Ascending aorta (tissue), 2 donors: ENCODE measurements at regions of chr4 and their contacts with region 1.

Region 1: DNA sequence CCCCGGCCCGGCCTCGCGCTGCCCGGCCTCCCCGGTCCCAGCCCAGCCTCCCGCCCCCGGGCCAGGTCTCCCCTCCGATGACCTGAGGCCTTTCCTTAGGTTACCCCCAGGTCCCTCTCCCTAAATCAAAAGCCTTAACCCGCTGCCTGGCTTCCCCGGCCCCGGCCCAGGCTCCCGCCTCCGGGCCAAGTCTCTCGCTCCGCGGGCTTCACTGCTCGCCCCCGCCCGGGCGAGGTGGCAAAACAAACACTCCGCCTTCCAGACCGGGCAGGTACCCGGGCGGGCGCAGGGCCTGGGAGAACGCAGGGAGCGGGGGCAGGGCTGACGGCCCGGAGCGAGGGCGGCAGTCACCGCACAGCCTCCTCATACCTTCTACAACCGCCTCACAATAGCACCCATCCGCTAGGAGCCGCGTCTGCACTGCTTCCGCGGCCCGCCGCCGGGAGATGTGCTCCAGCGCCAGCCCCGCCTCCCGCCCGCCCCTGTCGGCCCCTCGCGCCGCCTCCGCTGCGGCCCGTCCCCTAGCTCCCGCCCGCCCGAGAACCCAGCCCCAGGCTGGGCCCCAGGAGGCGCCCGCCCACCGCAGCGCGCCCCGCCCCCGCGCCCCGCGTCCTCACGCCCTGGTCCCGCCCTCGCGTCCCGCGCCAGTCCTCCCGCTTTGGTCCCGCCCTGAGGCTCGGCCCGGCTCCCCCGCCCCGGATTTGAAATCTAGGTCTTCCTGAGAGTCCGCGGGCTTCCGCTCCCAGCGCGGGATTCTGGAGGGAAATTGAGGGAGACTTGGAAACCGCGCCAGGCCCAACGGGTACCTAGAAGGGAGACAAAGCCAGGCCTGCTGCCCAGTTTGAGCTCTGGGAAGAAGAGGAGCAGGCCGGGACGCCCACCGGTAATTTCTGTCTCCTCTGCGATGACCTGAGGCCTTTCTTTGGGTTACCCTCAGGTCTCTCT is at the starts of genes CASP3 and PRIMPOL:
- DNase-seq: peak; percentile 88 to 98
- H3K4me3 ChIP-seq: peak within 1 kb of the TSS; percentile 88 to 100
- H3K27ac ChIP-seq: peak within 1 kb of the TSS; percentile 100
- H3K4me1 ChIP-seq: peaks cover 9 to 41% of the 10 kb centered on the region in 2 donors
- H3K27me3 ChIP-seq: no peaks in the 10 kb centered on the region
- CTCF ChIP-seq: peak in 1 of 3 experiments; percentile 17
- total RNA-seq, gene CASP3: 1.5 TPM
- total RNA-seq, gene PRIMPOL: 12.5 TPM

Region 2: GRCh38 chr4:183504064-183504929 is 1145.0 kb before region 1 on chr4:
- intact Hi-C with region 1: loop called (anchors 1 kb)
- DNase-seq: peak; percentile 93 to 100
- H3K4me3 ChIP-seq: peak overlapping the region; percentile 85 to 98
- H3K27ac ChIP-seq: peak overlapping the region; percentile 92 to 95
- H3K4me1 ChIP-seq: peaks cover 4 to 16% of the 10 kb centered on the region in 2 donors
- H3K27me3 ChIP-seq: no peaks in the 10 kb centered on the region
- CTCF ChIP-seq: peak; percentile 7 to 34 (median 8)

Region 3: DNA sequence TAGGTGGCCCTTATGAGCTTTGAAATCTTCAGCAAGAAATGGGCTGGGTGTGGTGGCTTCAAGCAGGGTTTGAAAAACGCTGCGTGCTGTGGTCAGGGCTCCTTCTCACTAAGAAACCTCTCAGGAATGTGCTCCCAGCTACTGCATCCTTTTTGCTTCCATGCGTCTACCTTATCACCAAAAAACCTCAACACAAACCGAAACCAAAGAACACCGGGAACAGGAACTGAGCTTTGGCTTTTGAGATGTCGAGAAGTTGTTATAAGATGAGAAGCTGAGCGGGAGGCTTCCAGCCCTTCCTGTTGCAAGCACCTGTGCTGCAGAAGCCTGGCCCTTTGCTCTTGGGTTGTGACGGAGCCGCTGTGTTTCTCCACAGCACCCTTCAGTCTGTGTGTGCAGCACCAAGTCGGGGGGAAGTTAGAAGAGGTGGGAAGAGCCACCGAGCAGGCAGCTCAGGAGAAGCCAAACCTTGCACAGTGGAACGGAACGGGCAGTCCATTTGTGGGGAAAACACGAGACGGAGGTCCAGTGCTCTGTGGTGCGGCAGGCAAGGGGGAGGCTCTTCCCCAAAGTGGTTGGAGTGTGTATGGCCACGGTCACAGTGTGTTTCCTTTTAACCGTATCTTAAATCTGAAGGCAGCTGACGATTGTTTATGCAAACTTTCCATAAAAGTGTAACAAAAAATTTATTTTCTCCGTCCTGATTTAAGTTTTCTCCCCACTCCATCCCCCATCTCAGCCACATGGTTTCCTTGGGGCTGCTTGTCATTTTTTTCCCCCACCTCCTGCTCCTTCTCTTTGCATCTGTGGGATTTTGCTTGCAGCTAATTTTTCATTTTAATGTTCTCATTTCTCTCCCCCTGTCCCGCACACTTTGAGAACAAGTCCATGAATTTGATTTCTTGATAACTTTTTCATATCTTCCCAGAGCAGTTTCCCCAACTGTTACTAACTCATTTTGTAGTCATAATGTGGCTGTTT is 620.6 kb before region 1 on chr4:
- intact Hi-C with region 1: no loop called
- DNase-seq: no peak
- H3K4me3 ChIP-seq: no peak overlapping the region
- H3K27ac ChIP-seq: no peak overlapping the region
- H3K4me1 ChIP-seq: no peaks in the 10 kb centered on the region
- H3K27me3 ChIP-seq: no peaks in the 10 kb centered on the region
- CTCF ChIP-seq: no peak

Region 4: GRCh38 chr4:184400375-184400870 is 248.9 kb before region 1 on chr4:
- intact Hi-C with region 1: loop called (anchors 5 kb)
- DNase-seq: peak in 1 of 2 donors; percentile 84
- H3K4me3 ChIP-seq: no peak overlapping the region
- H3K27ac ChIP-seq: peak overlapping the region; percentile 66 to 71
- H3K4me1 ChIP-seq: peaks cover 0 to 25% of the 10 kb centered on the region in 2 donors
- H3K27me3 ChIP-seq: no peaks in the 10 kb centered on the region
- CTCF ChIP-seq: peak in 1 of 3 experiments; percentile 15

Region 5: DNA sequence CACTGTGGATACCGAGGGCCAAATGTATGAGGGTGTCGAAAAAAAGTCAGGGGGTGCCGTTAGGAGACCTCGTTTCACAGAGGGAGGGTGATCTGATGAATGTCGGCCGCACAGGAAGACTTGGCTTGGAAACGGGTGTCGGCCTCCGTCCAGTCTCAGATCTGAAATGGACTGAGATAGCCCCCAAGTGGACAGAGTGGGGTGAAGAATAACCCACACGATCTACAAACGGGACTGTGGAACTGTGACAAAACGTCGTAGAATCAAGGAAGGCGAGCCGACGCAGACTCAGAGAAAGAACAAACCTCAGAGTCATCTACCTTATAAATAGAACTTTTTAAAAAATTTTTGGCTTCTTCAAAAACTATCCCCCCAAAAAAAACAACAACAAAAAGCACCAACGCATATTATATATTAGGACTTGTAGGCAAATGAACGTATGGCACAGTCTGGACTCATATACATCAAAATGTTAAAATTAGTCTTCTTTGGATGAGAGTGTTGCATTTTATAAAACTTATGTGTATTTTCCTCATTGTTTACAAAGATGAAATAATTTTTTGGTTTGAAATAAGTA is 111.2 kb before region 1 on chr4:
- intact Hi-C with region 1: loop called (anchors 1 kb)
- DNase-seq: peak; percentile 62 to 94
- H3K4me3 ChIP-seq: peak overlapping the region; percentile 66 to 70
- H3K27ac ChIP-seq: peak overlapping the region; percentile 88 to 89
- H3K4me1 ChIP-seq: peaks cover 2 to 20% of the 10 kb centered on the region in 2 donors
- H3K27me3 ChIP-seq: no peaks in the 10 kb centered on the region
- CTCF ChIP-seq: peak; percentile 51 to 71 (median 69)

Region 6: GRCh38 chr4:184745831-184746795 is 96.8 kb after region 1 on chr4:
- intact Hi-C with region 1: loop called (anchors 5 kb)
- DNase-seq: peak; percentile 17 to 86
- H3K4me3 ChIP-seq: peak overlapping the region in 1 of 2 donors; percentile 36
- H3K27ac ChIP-seq: peak overlapping the region; percentile 74 to 77
- H3K4me1 ChIP-seq: peaks cover 6 to 26% of the 10 kb centered on the region in 2 donors
- H3K27me3 ChIP-seq: no peaks in the 10 kb centered on the region
- CTCF ChIP-seq: peak; percentile 57 to 78 (median 71)

Region 7: GRCh38 chr4:185128272-185129119 is 479.2 kb after region 1 on chr4:
- intact Hi-C with region 1: loop called (anchors 5 kb)
- DNase-seq: peak in 1 of 2 donors; percentile 70
- H3K4me3 ChIP-seq: peak overlapping the region; percentile 61 to 72
- H3K27ac ChIP-seq: peak overlapping the region; percentile 81 to 82
- H3K4me1 ChIP-seq: peaks cover 0 to 8% of the 10 kb centered on the region in 2 donors
- H3K27me3 ChIP-seq: no peaks in the 10 kb centered on the region
- CTCF ChIP-seq: peak in 1 of 3 experiments; percentile 6

Region 8: DNA sequence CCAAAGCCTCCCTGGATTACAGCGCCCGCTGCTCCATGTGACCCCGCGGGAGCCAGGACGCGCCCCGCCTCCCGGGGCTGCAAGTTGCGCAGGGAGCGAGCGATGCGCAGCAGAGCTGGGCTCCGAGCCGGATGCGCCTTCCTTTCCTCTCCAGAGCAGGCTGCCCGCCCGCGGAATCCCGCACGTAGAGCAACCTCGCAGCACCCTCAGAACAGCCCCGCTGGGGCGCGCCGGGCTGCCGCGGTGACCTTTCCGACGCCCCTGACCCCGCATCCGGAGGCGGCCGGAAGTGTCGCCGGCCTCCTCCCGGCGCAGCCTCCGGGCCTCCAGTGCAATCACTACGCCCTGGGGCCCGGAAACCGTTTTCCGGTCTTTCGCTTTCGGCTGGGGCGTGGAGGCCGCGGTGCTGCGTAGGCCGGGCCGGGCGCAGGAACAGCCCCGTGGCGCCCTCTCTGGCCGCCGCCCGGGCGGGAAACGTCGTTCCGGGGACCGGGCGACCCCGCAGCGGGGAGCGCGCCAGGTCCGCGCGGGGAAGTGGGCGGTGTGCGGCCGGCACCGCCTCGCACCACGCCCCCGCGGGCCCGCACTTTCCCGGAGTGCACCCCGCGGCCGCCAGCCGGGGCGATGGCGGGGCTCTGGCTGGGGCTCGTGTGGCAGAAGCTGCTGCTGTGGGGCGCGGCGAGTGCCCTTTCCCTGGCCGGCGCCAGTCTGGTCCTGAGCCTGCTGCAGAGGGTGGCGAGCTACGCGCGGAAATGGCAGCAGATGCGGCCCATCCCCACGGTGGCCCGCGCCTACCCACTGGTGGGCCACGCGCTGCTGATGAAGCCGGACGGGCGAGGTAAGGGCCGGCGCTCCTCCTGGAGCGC is 1542.1 kb after region 1 on chr4 and contains the start of gene CYP4V2:
- intact Hi-C with region 1: loop called (anchors 10 kb)
- DNase-seq: peak in 1 of 2 donors; percentile 90
- H3K4me3 ChIP-seq: peak within 1 kb of the TSS; percentile 92 to 97
- H3K27ac ChIP-seq: peak within 1 kb of the TSS; percentile 95 to 97
- H3K4me1 ChIP-seq: peaks cover 0 to 15% of the 10 kb centered on the region in 2 donors
- H3K27me3 ChIP-seq: no peaks in the 10 kb centered on the region
- CTCF ChIP-seq: peak in 2 of 3 experiments; percentile 18 to 21
- total RNA-seq, gene CYP4V2: 14.3 TPM